Activated CD8-positive, alpha-beta T cell treated with anti-CD3 and anti-CD28 coated beads, Interleukin-2, amount 10 ng/mL, durations not matched to agents 7 days and 5 days (primary cell): ENCODE measurements at regions of chr14 and their contacts with region 1.

Region 1: GRCh38 chr14:49862089-49862673 is 9.6 kb upstream of the NEMF start:
- DNase-seq: peak; percentile 92
- ATAC-seq: no peak
- H3K4me3 Mint-ChIP-seq: no peak overlapping the region
- H3K27ac Mint-ChIP-seq: no peak overlapping the region
- H3K4me1 Mint-ChIP-seq: peaks cover 26% of the 10 kb centered on the region
- H3K27me3 Mint-ChIP-seq: no peaks in the 10 kb centered on the region

Region 2: DNA sequence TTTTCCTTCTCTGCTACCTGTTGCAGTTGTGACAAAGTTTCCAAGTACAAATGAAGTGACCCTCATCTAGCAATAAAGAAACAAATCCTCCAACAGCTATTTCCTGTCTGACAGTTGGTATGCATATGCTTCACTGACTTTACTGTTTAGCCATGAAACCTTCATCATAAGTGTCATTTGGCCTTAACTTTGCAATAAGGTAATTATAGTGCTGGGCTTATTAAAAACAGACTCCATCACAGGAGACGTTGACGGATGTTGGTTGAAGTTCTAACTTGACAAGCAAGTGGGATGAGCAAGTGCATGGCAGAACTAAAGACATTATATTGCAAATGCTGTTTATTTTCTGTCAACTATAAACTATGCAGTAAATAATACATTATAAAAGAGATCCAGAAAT is 701.2 kb before region 1 on chr14:
- CTCF ChIA-PET with region 1: no interaction called
- POLR2A ChIA-PET with region 1: no interaction called
- DNase-seq: no peak
- ATAC-seq: no peak
- H3K4me3 Mint-ChIP-seq: no peak overlapping the region
- H3K27ac Mint-ChIP-seq: no peak overlapping the region
- H3K4me1 Mint-ChIP-seq: peaks cover 3% of the 10 kb centered on the region
- H3K27me3 Mint-ChIP-seq: no peaks in the 10 kb centered on the region

Region 3: DNA sequence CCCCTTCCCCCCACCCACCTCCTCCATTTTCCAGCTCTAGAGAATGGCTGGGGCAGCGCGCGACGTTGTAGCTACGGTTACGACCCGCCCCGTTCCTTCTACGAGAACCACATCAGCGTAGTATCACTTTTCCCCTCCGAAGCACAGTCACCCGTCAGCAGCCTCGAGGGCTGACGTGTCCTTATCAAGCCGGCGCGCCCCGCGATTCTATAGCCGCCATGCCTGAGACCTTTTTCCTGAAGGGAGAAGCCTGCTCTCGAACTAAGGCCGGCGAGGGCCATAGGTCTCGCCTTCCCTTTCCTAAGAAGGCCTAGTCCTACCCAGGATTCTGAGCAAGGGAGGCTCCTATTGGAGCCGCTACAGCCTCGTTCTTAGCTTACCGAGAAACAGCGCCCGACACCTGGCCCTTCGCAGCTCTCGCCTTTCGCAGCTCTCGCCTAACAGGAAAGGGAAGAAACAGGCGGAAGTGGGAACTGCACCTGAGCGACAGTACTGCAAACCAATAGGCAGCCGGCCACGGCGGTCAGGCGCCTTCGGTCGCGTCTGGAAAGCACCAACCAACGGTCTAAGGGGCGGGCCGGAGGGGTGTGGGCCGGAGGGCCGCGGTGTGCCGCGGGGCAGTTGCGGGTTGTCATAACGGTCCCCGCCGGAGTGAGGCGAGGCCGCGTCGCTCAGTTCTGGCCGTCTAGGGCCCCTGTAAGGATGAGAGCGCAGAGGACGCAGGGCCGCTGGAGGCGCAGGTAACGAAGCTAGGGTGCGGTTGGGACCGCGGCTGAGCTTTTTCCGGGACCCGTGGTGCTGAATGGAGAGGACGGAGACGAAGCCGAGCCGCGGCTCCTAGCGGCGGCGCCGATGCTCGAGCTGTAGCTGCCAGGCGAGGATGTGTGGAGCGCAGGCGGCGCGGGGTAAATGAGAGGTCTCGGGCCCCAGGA is 241.7 kb before region 1 on chr14 and contains the starts of genes MGAT2 and RPL36AL:
- CTCF ChIA-PET with region 1: interaction called, 17 read pairs
- POLR2A ChIA-PET with region 1: interaction called, 12 read pairs
- DNase-seq: peak; percentile 97
- ATAC-seq: peak; percentile 91
- H3K4me3 Mint-ChIP-seq: peak within 1 kb of the TSS; percentile 93
- H3K27ac Mint-ChIP-seq: peak within 1 kb of the TSS; percentile 96
- H3K4me1 Mint-ChIP-seq: peaks cover 58% of the 10 kb centered on the region
- H3K27me3 Mint-ChIP-seq: no peaks in the 10 kb centered on the region
- total RNA-seq, gene MGAT2: 55.1 to 57.4 TPM
- total RNA-seq, gene RPL36AL: 229 to 241 TPM

Region 4: GRCh38 chr14:49786315-49787110 is 75.7 kb before region 1 on chr14:
- CTCF ChIA-PET with region 1: no interaction called
- POLR2A ChIA-PET with region 1: no interaction called
- DNase-seq: no peak
- ATAC-seq: no peak
- H3K4me3 Mint-ChIP-seq: no peak overlapping the region
- H3K27ac Mint-ChIP-seq: no peak overlapping the region
- H3K4me1 Mint-ChIP-seq: no peaks in the 10 kb centered on the region
- H3K27me3 Mint-ChIP-seq: no peaks in the 10 kb centered on the region

Region 5: GRCh38 chr14:49892636-49893308 is 30.6 kb after region 1 on chr14 and contains the start of gene ARF6:
- CTCF ChIA-PET with region 1: interaction called, 22 read pairs
- POLR2A ChIA-PET with region 1: interaction called, 46 read pairs
- DNase-seq: peak; percentile 98
- ATAC-seq: peak; percentile 89
- H3K4me3 Mint-ChIP-seq: peak within 1 kb of the TSS; percentile 90
- H3K27ac Mint-ChIP-seq: peak within 1 kb of the TSS; percentile 97
- H3K4me1 Mint-ChIP-seq: peaks cover 17% of the 10 kb centered on the region
- H3K27me3 Mint-ChIP-seq: no peaks in the 10 kb centered on the region
- total RNA-seq, gene ARF6: 183 to 193 TPM

Region 6: DNA sequence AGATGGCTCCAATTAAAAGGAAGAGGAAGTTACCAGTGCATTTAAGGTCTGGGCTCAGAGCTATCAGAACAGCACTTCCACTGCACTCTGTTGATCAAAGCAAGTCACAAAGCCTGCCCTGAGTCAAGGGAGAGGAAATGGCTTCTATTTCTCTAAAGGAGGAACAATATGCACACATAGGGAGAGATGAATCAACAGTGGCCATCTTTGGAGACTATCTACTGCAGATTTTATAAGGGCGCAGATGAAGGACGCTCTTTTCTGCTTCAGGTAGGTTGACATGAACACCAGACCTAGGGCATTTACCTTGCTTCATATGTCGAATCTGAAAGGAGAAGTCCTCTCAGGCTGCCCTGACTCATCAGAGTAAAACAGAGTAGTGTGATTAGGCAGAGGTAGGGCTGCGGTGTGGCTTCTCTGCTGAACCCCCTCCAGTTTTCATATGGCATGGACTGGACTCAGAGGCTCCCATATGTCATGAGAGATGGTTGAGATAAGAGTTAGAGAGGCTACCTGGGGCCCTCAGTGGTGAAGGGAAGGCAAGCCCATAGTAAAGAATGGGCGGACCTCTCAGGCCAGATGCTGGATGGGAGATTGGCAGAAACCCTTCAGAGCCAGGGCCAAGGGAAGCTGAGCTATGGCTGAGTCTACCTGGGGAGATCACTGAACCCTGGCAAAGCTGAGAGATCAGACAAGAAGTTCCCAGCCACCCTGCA is 115.1 kb after region 1 on chr14:
- CTCF ChIA-PET with region 1: interaction called, 36 read pairs
- POLR2A ChIA-PET with region 1: interaction called, 59 read pairs
- DNase-seq: peak; percentile 54
- ATAC-seq: peak; percentile 72
- H3K4me3 Mint-ChIP-seq: peak overlapping the region; percentile 62
- H3K27ac Mint-ChIP-seq: peak overlapping the region; percentile 87
- H3K4me1 Mint-ChIP-seq: peaks cover 78% of the 10 kb centered on the region
- H3K27me3 Mint-ChIP-seq: no peaks in the 10 kb centered on the region

Region 7: DNA sequence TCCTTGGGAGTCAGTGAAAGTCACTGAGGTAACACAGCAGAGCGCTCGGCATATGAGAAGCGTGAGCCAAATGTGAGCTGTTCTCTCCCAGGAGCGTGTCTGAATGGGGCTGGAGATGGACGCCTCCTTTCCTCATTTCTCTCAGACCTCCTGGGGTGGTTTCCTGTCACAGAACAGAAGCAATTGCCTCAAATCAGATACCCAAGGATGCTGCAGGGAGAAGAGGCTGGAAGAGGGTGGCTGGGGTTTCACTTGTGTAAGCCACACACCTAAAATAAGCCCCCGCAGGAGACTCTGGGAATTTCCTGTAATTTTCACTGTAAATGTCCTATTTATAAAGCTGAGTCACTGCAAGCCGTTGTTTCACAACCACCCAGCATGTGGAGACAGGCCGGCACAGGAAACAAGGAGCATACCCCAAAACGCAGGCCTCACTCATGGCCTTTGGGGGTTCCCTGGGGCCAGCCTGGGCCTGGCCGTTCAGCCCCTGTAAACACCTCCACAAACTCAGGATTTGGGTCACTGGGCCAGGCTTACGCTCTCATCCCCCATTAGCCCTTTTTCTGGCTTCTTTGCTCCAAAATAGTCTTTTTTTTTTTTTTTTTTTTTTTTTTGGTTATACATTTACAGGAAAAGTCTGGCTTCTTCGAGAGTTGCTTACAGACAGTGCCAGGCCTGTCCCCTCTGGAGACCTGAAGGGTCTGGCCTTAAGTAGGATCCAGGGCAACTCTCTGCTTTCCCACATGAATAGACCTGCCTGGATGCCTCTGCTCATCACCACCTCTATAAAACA is 198.9 kb after region 1 on chr14:
- CTCF ChIA-PET with region 1: interaction called, 54 read pairs
- POLR2A ChIA-PET with region 1: interaction called, 68 read pairs
- DNase-seq: peak; percentile 70
- ATAC-seq: peak; percentile 23
- H3K4me3 Mint-ChIP-seq: peak overlapping the region; percentile 95
- H3K27ac Mint-ChIP-seq: peak overlapping the region; percentile 99
- H3K4me1 Mint-ChIP-seq: peaks cover 94% of the 10 kb centered on the region
- H3K27me3 Mint-ChIP-seq: no peaks in the 10 kb centered on the region

Region 8: DNA sequence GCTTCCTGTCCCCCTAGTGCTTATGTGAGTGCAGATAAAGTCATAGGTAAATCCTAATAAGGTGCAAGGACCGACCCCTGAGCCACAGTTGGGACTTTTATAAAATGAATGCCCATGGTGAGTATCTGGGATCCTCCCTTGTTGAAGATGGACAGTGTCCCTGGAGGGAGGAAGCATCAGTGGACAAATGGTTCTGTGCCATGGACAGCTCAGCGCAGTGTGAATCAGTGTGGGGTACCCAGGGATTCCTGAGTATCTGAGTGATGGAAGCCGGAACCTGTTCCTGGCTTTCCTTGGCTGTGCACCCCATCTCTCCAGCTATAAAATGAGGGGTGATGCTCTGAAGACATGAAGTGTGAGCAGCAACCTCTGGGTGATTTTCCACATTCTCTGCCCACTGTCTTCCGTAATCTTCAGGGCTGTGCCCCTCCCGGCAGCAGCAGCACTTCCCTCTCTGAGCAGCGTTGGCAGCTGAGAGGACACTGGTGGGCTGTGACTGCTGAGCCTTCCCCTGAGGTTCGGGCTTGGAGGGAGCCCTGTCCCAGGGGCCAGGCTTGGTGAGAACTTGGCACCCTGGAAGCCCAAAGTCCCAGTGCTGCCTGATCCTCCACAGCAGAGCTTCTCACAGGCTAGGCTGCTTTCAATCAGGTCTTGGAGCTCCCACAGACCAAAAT is 229.2 kb after region 1 on chr14:
- CTCF ChIA-PET with region 1: interaction called, 181 read pairs
- POLR2A ChIA-PET with region 1: interaction called, 27 read pairs
- DNase-seq: no peak
- ATAC-seq: no peak
- H3K4me3 Mint-ChIP-seq: no peak overlapping the region
- H3K27ac Mint-ChIP-seq: peak overlapping the region; percentile 62
- H3K4me1 Mint-ChIP-seq: peaks cover 91% of the 10 kb centered on the region
- H3K27me3 Mint-ChIP-seq: no peaks in the 10 kb centered on the region

Region 9: DNA sequence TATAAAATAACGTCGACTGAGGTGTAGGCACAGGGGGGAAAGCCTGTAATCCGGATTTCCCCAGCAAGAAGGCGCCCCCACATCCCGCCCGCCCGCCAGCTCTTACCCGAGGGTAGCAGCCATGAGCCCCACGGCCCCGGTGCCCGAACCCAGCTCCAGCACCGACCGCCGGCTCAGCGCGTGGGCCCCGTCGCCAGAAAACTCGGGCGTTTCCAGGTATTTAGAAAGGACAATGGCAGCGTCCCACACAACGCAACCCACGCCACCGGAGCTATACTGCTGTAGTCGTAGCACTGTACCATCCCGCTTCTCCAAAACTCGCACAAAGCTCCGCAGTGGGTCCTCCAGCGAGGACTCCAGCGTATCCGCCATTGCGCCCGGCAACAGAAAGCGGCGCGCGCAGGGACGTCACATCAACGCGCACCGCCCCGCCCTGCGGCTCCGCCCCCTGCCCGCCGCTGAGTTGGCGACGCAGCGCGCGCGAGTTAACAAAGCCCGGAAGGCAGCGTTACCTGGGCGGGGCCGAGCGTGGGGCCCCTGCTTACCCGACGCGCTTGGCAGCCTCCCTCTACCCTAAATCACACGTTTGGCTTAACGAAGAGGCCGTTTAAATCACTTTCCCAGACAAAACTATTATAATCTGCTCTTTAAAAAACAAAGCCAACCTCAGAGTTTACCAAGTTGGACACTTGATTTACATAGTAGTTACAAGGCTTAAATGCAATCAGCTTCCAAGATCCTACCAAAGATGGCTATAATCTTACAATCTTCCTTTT is 254.2 kb after region 1 on chr14 and contains the start of gene VCPKMT:
- CTCF ChIA-PET with region 1: interaction called, 10 read pairs
- POLR2A ChIA-PET with region 1: interaction called, 22 read pairs
- DNase-seq: peak; percentile 96
- ATAC-seq: peak; percentile 99
- H3K4me3 Mint-ChIP-seq: peak within 1 kb of the TSS; percentile 98
- H3K27ac Mint-ChIP-seq: peak within 1 kb of the TSS; percentile 99
- H3K4me1 Mint-ChIP-seq: peaks cover 36% of the 10 kb centered on the region
- H3K27me3 Mint-ChIP-seq: no peaks in the 10 kb centered on the region
- total RNA-seq, gene VCPKMT: 12.4 to 13.0 TPM